ENCODE measurements at regions of chr13 and their contacts with region 1.

Region 1: GRCh38 chr13:32639502-32640105 is 53.4 kb downstream of the PDS5B start:
- DNase-seq: peak; percentile 54 to 81
- H3K4me3 ChIP-seq: no peak overlapping the region
- H3K27ac ChIP-seq: no peak overlapping the region
- H3K4me1 ChIP-seq: peaks cover 5 to 47% (median 24%) of the 10 kb centered on the region in 4 donors
- H3K27me3 ChIP-seq: no peaks in the 10 kb centered on the region
- CTCF ChIP-seq: peak in 5 of 7 experiments; percentile 49 to 78 (median 68)
- EP300 ChIP-seq: no peak
- POLR2A ChIP-seq: no peak

Region 2: GRCh38 chr13:32594157-32594738 is 45.4 kb before region 1 on chr13:
- intact Hi-C with region 1: loop called (anchors 10 kb)
- DNase-seq: no peak
- H3K4me3 ChIP-seq: no peak overlapping the region
- H3K27ac ChIP-seq: no peak overlapping the region
- H3K4me1 ChIP-seq: peaks cover 5 to 54% (median 28%) of the 10 kb centered on the region in 4 donors
- H3K27me3 ChIP-seq: no peaks in the 10 kb centered on the region
- CTCF ChIP-seq: no peak
- EP300 ChIP-seq: no peak
- POLR2A ChIP-seq: no peak

Measured in stomach (tissue), 19 donors.